Activated CD8-positive, alpha-beta T cell treated with anti-CD3 and anti-CD28 coated beads, Interleukin-2, amount 10 ng/mL, durations not matched to agents 7 days and 5 days (primary cell): ENCODE measurements at regions of chr14 and their contacts with region 1.

Region 1: DNA sequence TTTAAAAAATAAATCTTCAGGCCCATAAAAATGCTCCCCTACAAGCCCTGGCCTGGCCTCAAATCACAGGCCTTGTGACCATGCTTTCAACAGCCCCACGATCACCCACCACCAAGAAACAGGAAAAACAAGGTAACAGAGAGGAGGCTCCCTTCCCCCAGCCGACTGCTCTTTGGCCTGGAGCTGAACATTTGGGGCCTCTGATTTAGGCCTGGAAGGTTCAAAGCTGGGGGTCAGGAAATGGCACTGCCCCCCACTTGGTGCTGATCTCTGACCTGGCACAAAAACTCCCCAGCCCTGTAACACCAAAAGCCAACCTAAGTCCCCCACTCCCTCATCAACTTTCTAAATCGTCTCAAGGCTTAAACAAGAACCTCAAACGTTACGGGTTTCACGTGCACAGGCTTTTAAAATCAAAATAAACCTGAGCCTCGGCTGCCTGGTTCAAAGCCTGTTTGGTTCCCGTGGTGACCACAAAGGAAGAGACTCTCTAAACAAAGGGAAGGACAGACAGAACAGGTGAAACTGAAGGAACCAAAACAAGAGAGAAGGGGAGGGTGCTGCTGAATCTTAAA is 9.0 kb downstream of the ACTN1 start:
- DNase-seq: peak; percentile 66
- ATAC-seq: peak; percentile 65
- H3K4me3 Mint-ChIP-seq: peak overlapping the region; percentile 8
- H3K27ac Mint-ChIP-seq: peak overlapping the region; percentile 69
- H3K4me1 Mint-ChIP-seq: peaks cover 72% of the 10 kb centered on the region
- H3K27me3 Mint-ChIP-seq: no peaks in the 10 kb centered on the region

Region 2: DNA sequence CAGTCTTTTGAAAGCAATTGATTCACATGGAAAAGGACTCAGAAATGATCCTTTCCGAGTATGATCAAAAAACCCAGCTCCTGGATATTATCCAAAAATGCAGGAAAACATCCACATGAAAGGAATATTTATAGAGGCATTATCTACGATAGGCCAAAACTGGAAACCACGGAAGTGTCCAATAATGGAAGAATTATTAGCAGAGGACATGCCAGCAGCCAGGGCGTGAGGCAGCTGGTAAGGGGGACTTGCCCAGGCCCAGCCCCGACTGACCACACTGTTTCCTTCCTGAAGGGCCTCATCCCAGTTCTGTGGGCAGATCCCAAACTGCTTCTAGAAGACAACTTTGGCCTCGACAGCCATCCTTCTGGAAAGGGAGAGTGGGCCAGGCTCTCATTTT is 11.6 kb before region 1 on chr14:
- CTCF ChIA-PET with region 1: interaction called, 21 read pairs
- POLR2A ChIA-PET with region 1: interaction called, 18 read pairs
- DNase-seq: no peak
- ATAC-seq: no peak
- H3K4me3 Mint-ChIP-seq: no peak overlapping the region
- H3K27ac Mint-ChIP-seq: no peak overlapping the region
- H3K4me1 Mint-ChIP-seq: peaks cover 80% of the 10 kb centered on the region
- H3K27me3 Mint-ChIP-seq: no peaks in the 10 kb centered on the region

Region 3: DNA sequence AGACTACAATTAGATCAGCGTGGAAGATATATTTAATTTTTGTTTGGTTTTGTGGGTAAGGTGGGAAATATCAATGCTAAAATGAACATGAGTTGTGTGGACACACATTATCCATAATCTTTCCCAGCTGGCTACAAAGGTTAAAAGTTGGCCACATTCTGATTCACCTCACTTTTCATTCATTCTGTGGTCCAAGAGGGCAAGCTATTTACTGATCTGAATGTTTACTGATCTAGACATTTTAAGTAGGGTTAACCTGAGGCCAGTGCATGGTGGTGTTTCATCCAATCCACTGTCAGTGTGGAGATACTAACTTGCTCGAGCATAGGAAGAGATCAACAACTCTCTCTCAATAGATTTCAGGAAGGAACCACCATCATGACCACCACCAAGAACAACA is 111.1 kb after region 1 on chr14:
- CTCF ChIA-PET with region 1: no interaction called
- POLR2A ChIA-PET with region 1: no interaction called
- DNase-seq: no peak
- ATAC-seq: no peak
- H3K4me3 Mint-ChIP-seq: no peak overlapping the region
- H3K27ac Mint-ChIP-seq: no peak overlapping the region
- H3K4me1 Mint-ChIP-seq: no peaks in the 10 kb centered on the region
- H3K27me3 Mint-ChIP-seq: no peaks in the 10 kb centered on the region